Ovary (tissue), 10 donors: ENCODE measurements at regions of chr18 and their contacts with region 1.

Region 1: DNA sequence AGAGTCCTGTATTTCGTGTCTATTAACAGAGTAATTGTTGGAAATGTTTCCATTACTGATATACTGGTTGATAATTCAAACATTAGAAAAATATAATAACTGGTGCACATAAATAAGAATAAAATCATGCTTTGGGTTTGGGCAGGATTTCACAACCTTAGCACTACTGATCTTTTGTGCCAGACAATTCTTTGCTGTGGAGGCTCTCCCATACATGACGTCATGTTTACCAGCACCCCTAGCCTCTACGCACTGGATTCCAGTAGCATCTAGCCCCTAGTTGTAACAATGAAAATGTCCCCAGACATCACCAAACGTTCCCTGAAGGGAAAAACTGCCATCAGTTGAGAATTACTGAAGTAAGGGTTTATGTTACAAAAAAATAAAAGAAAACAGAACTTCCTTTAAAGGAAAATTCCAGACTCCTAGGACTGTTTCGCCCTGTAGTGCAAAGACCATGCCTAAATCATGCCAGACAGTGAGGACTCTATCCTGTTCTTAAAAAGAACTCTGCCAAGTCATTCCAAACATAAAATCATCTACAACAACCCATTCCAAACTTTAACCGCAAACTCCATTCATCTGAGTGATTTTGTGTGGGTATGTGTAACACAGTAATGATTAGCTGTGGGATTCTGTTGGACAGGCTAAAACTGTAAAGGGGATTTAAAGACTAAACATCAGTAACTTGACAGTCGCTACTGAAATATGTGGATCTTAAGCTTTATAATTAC is 313.4 kb upstream of the CCDC68 start:
- DNase-seq: peak in 1 of 5 donors; percentile 56
- H3K4me3 ChIP-seq: no peak overlapping the region
- H3K27ac ChIP-seq: no peak overlapping the region
- H3K4me1 ChIP-seq: peaks cover 4% of the 10 kb centered on the region
- H3K27me3 ChIP-seq: no peaks in the 10 kb centered on the region
- CTCF ChIP-seq: no peak
- EP300 ChIP-seq: no peak
- POLR2A ChIP-seq: no peak

Region 2: GRCh38 chr18:55249550-55249949 is 23.1 kb before region 1 on chr18:
- intact Hi-C with region 1: loop called in 1 of 4 experiments (anchors 2 kb)
- DNase-seq: no peak
- H3K4me3 ChIP-seq: no peak overlapping the region
- H3K27ac ChIP-seq: no peak overlapping the region
- H3K4me1 ChIP-seq: peaks cover 7% of the 10 kb centered on the region
- H3K27me3 ChIP-seq: no peaks in the 10 kb centered on the region
- CTCF ChIP-seq: no peak
- EP300 ChIP-seq: no peak
- POLR2A ChIP-seq: no peak